ENCODE measurements at regions of chr3 and their contacts with region 1.

Region 1: DNA sequence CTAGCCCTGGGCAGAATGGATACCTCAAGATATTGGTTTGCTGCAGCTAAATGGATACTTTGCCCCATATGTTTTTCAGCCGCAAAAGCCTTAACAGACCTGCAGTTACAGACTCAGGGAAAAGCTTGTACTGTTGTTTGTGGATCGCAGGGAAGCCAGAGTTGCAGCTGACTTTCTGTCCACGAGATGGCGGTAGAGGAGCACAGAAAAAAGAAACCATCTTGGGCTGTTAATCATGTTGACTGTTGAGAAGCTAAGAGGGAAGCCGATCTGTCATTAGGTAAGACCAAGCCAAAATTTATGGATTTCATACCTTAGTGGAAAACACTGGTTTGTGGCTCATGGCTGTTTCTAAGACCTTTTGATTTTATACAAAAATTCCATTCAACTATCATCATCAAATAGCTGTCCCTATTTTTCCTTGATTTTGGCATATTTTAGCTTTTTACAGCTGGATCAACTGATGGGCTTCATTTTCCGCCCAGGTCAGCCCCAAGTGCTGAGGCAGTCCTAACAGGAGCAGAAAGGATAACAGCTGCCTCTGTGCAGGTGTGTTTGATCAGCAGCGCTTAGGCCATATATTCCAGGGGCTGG is 205.7 kb upstream of the ZPLD1 start:
- DNase-seq: peak; percentile 62
- ATAC-seq: peak; percentile 56
- H3K4me3 Mint-ChIP-seq: no peak overlapping the region
- H3K27ac Mint-ChIP-seq: no peak overlapping the region
- H3K4me1 Mint-ChIP-seq: peaks cover 54% of the 10 kb centered on the region
- H3K27me3 Mint-ChIP-seq: no peaks in the 10 kb centered on the region
- CTCF ChIP-seq: no peak

Region 2: GRCh38 chr3:101512646-101513418 is 716.3 kb before region 1 on chr3 and contains the start of gene SENP7:
- CTCF ChIA-PET with region 1: no interaction called
- POLR2A ChIA-PET with region 1: no interaction called
- intact Hi-C with region 1: loop called (anchors 10 kb)
- DNase-seq: peak; percentile 74
- ATAC-seq: peak; percentile 72
- H3K4me3 Mint-ChIP-seq: peak within 1 kb of the TSS; percentile 98
- H3K27ac Mint-ChIP-seq: peak within 1 kb of the TSS; percentile 99
- H3K4me1 Mint-ChIP-seq: peaks cover 35% of the 10 kb centered on the region
- H3K27me3 Mint-ChIP-seq: no peaks in the 10 kb centered on the region
- CTCF ChIP-seq: no peak
- total RNA-seq, gene SENP7: 18.6 and 22.1 TPM in 2 replicates

Region 3: GRCh38 chr3:101819758-101820157 is 409.4 kb before region 1 on chr3:
- CTCF ChIA-PET with region 1: interaction called, 847 read pairs
- POLR2A ChIA-PET with region 1: interaction called, 31 read pairs
- intact Hi-C with region 1: no loop called
- DNase-seq: no peak
- ATAC-seq: peak; percentile 83
- H3K4me3 Mint-ChIP-seq: no peak overlapping the region
- H3K27ac Mint-ChIP-seq: peak overlapping the region; percentile 81
- H3K4me1 Mint-ChIP-seq: peaks cover 64% of the 10 kb centered on the region
- H3K27me3 Mint-ChIP-seq: no peaks in the 10 kb centered on the region
- CTCF ChIP-seq: no peak

Region 4: GRCh38 chr3:101902041-101902440 is 327.1 kb before region 1 on chr3:
- CTCF ChIA-PET with region 1: interaction called, 11 read pairs
- POLR2A ChIA-PET with region 1: interaction called, 4 read pairs
- intact Hi-C with region 1: no loop called
- DNase-seq: no peak
- ATAC-seq: peak; percentile 56
- H3K4me3 Mint-ChIP-seq: peak overlapping the region; percentile 36
- H3K27ac Mint-ChIP-seq: peak overlapping the region; percentile 91
- H3K4me1 Mint-ChIP-seq: peaks cover 61% of the 10 kb centered on the region
- H3K27me3 Mint-ChIP-seq: no peaks in the 10 kb centered on the region
- CTCF ChIP-seq: no peak

Region 5: DNA sequence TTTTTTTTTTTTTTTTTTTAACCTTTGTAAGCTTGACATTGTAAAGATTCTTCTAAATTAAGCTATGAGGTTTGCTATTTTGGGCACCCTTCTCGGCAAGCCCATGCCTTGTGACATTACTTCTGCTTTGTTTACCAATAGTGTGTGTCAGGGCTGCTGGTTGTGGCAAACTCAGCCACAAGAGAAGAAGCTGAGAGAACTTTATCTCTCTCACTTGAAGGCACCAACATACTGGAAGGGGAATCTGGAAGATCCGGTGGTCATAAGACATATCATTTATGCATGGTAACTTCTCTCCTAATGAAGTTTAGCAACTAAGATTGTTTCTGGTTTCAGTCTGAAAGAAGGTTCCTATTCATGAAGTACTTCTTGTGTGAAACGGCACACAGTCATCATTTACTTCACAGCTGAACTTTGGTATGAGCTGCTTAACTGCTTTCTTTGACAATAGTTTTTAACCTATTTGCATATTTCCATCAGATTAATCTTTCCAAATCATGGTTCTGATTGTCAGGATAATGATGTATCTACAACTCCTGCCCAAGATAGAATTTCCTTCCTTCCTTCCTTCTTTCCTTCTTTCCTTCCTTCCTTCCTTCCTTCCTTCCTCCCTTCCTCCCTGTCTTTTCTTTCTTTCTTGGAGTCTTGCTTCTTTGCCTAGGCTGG is 190.5 kb before region 1 on chr3:
- CTCF ChIA-PET with region 1: interaction called, 14 read pairs
- POLR2A ChIA-PET with region 1: no interaction called
- intact Hi-C with region 1: no loop called
- DNase-seq: no peak
- ATAC-seq: peak; percentile 82
- H3K4me3 Mint-ChIP-seq: peak overlapping the region; percentile 56
- H3K27ac Mint-ChIP-seq: peak overlapping the region; percentile 91
- H3K4me1 Mint-ChIP-seq: peaks cover 43% of the 10 kb centered on the region
- H3K27me3 Mint-ChIP-seq: no peaks in the 10 kb centered on the region
- CTCF ChIP-seq: no peak

Region 6: DNA sequence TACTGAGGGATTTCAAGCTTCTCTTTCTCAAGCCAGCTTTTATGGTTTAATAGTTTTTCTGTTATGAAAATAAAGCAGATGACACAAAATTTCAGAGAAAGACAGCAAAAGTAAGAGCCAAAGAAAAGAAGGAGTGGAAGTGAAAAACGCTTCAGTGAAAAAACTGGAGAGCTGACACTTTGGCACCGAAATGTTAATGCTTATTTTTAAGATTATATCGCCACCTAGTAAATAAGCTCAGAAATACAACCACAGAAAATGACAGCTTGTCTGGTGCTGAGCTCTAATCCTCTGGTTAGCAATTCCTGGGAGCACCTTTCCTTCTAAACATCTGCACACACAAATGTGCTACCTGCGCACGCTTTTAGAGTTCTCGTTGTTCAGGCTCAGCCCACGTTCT is 307.3 kb after region 1 on chr3:
- CTCF ChIA-PET with region 1: interaction called, 198 read pairs
- POLR2A ChIA-PET with region 1: interaction called, 10 read pairs
- intact Hi-C with region 1: loop called (anchors 1 kb)
- DNase-seq: no peak
- ATAC-seq: peak; percentile 57
- H3K4me3 Mint-ChIP-seq: no peak overlapping the region
- H3K27ac Mint-ChIP-seq: no peak overlapping the region
- H3K4me1 Mint-ChIP-seq: no peaks in the 10 kb centered on the region
- H3K27me3 Mint-ChIP-seq: peaks cover 24% of the 10 kb centered on the region
- CTCF ChIP-seq: no peak

Measured in activated B cell treated with CpG ODN at 0.5 μM for 24 hours (primary cell).